Gastrocnemius medialis (tissue), 4 donors: ENCODE measurements at regions of chr16 and their contacts with region 1.

Region 1: DNA sequence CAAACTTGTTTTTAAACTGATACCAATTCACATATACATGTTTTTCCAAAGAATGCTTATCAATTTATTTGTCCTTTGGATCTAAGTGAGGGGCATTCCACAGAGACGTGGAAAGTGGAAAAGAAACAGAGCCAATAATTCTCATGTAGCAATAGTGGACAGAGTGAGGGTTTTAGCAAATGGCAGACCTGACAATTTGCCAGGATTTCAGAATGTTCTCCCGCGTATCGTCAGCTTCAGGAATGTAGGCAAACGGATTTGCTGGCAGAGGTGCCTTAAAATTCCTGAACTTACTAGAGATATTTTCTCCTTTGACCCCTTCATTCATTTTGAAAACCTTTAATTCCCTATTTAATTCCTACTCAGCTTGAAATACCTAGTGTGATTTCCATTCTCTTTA is 193.4 kb upstream of the CPHXL start:
- DNase-seq: no peak
- ATAC-seq: no peak
- H3K4me3 ChIP-seq: no peak overlapping the region
- H3K27ac ChIP-seq: no peak overlapping the region
- H3K4me1 ChIP-seq: no peaks in the 10 kb centered on the region
- H3K27me3 ChIP-seq: no peaks in the 10 kb centered on the region
- CTCF ChIP-seq: no peak
- POLR2A ChIP-seq: no peak

Region 2: GRCh38 chr16:75801307-75801706 is 118.4 kb before region 1 on chr16:
- in situ Hi-C with region 1: loop called in 1 of 4 experiments (anchors 25 kb)
- intact Hi-C with region 1: no loop called
- DNase-seq: no peak
- ATAC-seq: no peak
- H3K4me3 ChIP-seq: no peak overlapping the region
- H3K27ac ChIP-seq: no peak overlapping the region
- H3K4me1 ChIP-seq: no peaks in the 10 kb centered on the region
- H3K27me3 ChIP-seq: no peaks in the 10 kb centered on the region
- CTCF ChIP-seq: no peak
- POLR2A ChIP-seq: no peak